Activated CD8-positive, alpha-beta T cell treated with anti-CD3 and anti-CD28 coated beads, Interleukin-2, amount 10 ng/mL, durations not matched to agents 7 days and 5 days (primary cell): ENCODE measurements at regions of chr22 and their contacts with region 1.

Region 1: DNA sequence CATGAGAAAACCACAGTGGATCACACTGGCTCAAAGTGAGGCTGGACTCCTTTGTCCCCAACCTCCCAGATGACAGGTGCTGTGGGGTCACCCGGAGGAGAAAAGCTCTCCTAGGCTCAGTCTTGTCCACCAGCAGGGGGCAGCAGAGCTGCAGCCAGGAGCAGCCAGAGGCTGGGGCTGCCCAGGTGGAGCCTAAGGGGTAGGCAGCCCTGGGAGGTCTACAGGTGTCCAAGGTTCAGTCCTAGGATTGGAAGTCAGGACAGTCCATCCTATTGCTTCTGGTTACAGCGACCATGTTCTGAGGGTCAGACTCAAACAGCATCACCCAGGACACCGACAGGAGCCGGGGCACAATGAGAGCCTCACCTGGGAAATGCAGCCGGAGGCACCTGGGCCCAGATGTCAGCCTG is 77.6 kb upstream of the IGLL5 start:
- DNase-seq: peak; percentile 75
- ATAC-seq: peak; percentile 88
- H3K4me3 Mint-ChIP-seq: no peak overlapping the region
- H3K27ac Mint-ChIP-seq: no peak overlapping the region
- H3K4me1 Mint-ChIP-seq: peaks cover 5% of the 10 kb centered on the region
- H3K27me3 Mint-ChIP-seq: peaks cover 24% of the 10 kb centered on the region

Region 2: DNA sequence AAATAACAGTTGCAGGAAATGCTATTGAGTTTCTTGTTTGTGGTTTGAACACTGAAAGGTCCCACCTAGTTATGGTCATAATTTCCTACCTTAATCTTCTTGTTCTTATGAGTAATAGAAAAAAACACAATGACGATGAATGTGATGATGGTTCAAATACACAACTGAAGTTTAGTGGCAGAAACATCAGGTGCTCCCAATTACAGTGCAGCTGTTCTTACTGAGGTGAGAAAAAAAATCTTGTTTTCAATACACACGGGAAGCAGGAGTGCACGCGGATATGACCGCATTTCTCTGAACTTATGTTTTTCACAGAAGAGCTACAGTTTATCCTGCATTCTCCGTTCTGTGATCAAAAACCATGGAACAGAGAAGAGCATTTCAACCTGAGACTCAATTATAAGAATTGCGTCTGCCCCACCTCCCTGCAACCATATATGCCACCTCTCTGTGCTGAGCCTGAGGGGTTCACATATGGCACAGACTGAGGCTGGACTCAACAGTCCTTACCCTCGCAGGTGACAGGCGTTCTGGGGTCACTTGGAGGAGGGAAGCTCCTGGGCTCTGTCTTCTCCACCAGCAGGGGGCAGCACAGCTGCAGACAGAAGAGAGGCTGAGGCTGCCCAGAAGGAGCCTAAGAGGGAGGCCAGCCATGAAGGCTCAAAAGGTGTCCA is 22.1 kb before region 1 on chr22:
- CTCF ChIA-PET with region 1: interaction called, 14 read pairs
- POLR2A ChIA-PET with region 1: no interaction called
- DNase-seq: peak; percentile 81
- ATAC-seq: peak; percentile 90
- H3K4me3 Mint-ChIP-seq: no peak overlapping the region
- H3K27ac Mint-ChIP-seq: peak overlapping the region; percentile 30
- H3K4me1 Mint-ChIP-seq: peaks cover 25% of the 10 kb centered on the region
- H3K27me3 Mint-ChIP-seq: peaks cover 13% of the 10 kb centered on the region

Region 3: DNA sequence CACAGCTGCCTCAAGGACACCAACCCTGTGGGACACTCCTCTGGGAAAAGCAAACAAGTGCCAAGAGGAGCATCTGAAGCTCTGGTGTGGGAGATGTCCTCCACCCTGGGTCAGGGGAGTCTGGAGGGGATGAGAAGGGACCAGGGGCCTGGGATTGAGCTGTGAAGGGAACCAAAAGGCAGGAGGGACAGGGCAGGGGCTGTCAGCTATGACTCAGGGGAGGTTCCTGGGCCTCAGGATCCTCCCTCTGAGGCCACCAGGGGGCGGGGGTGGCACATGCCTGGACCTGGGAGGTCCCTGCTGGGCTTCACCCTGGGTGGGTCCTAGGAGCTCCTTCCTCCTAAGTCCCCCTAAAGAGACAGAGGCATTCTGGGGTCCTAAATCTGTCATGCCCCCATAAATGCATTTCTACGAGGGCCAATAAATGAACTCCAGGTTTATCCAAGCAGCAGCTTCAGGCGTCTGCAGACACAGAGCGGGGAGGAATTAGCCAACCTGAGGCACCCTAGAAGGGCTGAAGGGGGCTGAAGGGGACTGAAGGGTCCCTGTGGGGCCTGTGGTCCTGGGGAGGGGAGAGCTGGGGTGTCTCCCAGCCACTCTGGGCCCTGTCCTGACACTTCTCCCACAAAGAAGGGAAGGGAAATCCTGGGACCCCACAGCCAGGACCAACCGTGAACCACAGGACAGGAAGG is 45.7 kb after region 1 on chr22:
- CTCF ChIA-PET with region 1: interaction called, 173 read pairs
- POLR2A ChIA-PET with region 1: no interaction called
- DNase-seq: peak; percentile 56
- ATAC-seq: peak; percentile 83
- H3K4me3 Mint-ChIP-seq: no peak overlapping the region
- H3K27ac Mint-ChIP-seq: no peak overlapping the region
- H3K4me1 Mint-ChIP-seq: no peaks in the 10 kb centered on the region
- H3K27me3 Mint-ChIP-seq: peaks cover 40% of the 10 kb centered on the region

Region 4: DNA sequence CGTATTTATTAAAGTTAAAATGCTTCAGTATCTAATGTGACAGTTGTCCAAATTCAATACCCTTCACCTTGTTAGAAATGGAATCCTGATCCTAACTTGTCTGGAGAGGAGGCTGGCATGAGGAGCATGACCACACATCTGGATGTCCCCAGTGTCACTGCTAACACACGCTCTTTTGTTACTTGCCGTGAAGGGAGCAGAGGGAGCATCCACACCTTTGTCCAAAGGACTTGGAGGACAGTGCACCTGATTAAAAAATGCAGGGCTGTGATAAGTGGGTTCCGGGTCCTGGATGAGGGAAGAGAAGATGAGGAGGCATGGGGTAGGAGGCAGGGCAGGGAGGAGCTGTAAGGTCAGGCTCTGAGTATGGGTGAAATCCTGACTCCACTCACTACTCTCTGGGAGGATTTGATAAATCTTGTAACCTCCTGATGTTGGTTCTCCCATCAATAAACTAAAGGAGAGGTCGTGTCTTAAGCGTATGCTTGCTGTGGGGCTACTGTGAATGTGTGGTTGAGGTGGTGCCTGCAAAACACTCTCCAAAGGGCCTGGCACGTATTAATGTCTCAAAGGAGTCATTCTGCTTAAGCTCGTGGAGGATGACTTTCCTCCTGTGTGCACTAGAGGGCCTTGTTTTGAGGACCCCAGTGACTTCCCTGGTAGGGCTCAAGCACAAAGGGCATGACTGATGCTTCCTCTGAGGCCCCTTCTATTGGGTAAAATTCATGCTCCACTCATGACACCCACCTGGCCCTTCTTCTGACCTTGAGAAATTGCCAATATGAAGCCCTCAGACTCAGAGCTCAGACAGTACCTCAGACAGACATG is 60.8 kb after region 1 on chr22:
- CTCF ChIA-PET with region 1: interaction called, 17 read pairs
- POLR2A ChIA-PET with region 1: no interaction called
- DNase-seq: peak; percentile 27
- ATAC-seq: no peak
- H3K4me3 Mint-ChIP-seq: no peak overlapping the region
- H3K27ac Mint-ChIP-seq: no peak overlapping the region
- H3K4me1 Mint-ChIP-seq: peaks cover 13% of the 10 kb centered on the region
- H3K27me3 Mint-ChIP-seq: peaks cover 38% of the 10 kb centered on the region

Region 5: GRCh38 chr22:22877523-22878210 is 67.6 kb after region 1 on chr22:
- CTCF ChIA-PET with region 1: interaction called, 256 read pairs
- POLR2A ChIA-PET with region 1: no interaction called
- DNase-seq: peak; percentile 82
- ATAC-seq: peak; percentile 60
- H3K4me3 Mint-ChIP-seq: no peak overlapping the region
- H3K27ac Mint-ChIP-seq: no peak overlapping the region
- H3K4me1 Mint-ChIP-seq: no peaks in the 10 kb centered on the region
- H3K27me3 Mint-ChIP-seq: peaks cover 21% of the 10 kb centered on the region

Region 6: DNA sequence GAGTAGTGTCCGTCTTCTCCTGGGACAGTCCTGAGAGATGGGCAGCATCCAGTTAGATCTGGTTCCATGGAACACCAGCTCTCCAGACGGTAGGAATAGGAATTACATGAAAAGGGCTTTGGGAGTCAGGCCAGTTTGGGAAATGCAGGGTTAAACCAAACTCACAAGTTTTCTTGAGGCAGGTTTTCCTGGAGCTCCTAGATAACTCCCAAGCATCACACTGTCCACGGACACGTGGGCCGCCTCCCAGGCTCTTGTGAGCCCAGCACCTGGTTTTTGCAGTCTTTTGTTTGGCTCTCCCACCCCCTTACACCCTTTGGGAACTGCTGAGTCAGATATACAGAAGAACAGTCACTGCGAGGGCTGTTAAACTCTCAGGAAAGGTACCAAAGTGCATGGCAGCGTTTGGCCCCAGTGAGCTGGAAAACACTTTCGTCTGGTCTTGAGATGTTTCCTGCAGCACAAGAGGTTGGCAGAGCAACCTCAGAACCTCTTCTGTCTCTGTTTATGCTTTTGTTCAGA is 460.2 kb after region 1 on chr22:
- CTCF ChIA-PET with region 1: no interaction called
- POLR2A ChIA-PET with region 1: no interaction called
- DNase-seq: no peak
- ATAC-seq: no peak
- H3K4me3 Mint-ChIP-seq: no peak overlapping the region
- H3K27ac Mint-ChIP-seq: no peak overlapping the region
- H3K4me1 Mint-ChIP-seq: peaks cover 14% of the 10 kb centered on the region
- H3K27me3 Mint-ChIP-seq: no peaks in the 10 kb centered on the region